ENCODE measurements at regions of chr19 and their contacts with region 1.

Region 1: DNA sequence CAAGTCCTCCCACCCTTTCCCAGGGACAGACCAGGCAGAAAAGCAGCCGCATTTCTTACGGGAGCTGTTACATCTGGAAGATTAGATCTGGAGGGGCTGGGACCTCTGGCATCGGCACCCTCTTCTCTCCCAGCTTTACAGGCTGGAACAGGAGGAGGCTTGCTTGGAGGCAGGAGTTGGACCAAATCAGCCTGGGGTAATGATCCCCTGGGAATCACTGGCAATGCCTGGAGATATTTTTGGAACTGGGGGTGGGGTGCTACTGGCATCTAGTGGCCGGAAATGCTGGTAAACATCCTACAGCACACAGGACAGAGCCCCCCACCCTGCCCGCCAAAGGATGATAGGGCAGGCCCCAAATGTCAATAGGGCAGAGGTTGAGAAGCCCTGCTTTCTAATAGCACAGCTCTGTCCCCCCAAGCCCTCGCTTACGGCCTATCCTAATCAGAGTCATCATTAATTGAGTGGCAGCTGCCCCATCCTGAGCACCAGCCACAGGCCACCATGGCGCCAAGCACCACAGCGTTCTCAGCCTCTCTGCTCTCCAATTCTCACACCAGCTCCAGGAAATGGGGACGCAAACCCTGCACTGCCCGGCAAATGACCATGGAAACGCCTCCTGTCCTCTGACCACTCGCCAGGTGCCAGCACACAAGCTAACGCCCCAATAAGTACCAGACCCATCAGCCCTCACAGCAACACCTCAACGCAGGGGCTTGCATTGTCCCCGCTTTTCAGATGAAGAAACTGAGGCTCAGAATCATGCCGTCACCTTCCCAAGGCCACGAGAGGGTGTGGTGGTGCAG is 20.6 kb downstream of the LRRC4B start:
- DNase-seq: no peak
- H3K4me3 ChIP-seq: no peak overlapping the region
- H3K27ac ChIP-seq: no peak overlapping the region
- H3K4me1 ChIP-seq: no peaks in the 10 kb centered on the region
- H3K27me3 ChIP-seq: peaks cover 2% of the 10 kb centered on the region
- CTCF ChIP-seq: no peak

Region 2: DNA sequence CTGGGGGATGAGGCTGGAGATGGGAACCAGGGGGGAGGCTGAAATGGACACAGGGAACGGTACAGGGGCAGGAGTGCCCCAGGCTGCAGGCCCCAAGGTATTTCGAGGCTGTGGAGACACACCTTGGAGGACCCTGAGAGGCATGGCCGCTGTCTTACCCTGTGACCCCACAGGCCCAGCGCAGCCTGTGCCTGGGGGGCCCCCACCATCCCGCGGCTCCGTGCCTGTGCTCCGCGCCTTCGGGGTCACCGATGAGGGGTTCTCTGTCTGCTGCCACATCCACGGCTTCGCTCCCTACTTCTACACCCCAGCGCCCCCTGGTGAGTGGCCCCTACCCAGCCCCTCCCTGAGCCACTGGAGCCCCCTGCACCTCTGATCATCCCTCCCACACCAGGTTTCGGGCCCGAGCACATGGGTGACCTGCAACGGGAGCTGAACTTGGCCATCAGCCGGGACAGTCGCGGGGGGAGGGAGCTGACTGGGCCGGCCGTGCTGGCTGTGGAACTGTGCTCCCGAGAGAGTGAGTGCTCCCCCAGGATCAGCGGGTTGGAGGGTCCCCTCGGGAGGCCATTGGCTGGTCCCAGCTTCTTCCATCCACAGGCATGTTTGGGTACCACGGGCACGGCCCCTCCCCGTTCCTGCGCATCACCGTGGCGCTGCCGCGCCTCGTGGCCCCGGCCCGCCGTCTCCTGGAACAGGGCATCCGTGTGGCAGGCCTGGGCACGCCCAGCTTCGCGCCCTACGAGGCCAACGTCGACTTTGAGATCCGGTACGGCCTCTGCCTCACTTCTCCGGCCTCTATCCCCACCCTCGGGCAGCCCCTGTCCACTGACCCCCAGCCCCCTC is 145.8 kb before region 1 on chr19:
- CTCF ChIA-PET with region 1: no interaction called
- dilution Hi-C with region 1: loop called (anchors 10 kb)
- in situ Hi-C with region 1: no loop called
- intact Hi-C with region 1: no loop called
- DNase-seq: no peak
- H3K4me3 ChIP-seq: no peak overlapping the region
- H3K27ac ChIP-seq: no peak overlapping the region
- H3K4me1 ChIP-seq: no peaks in the 10 kb centered on the region
- H3K27me3 ChIP-seq: no peaks in the 10 kb centered on the region
- CTCF ChIP-seq: no peak

Measured in mammary epithelial cell (primary cell).